KBM-7 (cell line): ENCODE measurements at regions of chr15 and their contacts with region 1.

Region 1: DNA sequence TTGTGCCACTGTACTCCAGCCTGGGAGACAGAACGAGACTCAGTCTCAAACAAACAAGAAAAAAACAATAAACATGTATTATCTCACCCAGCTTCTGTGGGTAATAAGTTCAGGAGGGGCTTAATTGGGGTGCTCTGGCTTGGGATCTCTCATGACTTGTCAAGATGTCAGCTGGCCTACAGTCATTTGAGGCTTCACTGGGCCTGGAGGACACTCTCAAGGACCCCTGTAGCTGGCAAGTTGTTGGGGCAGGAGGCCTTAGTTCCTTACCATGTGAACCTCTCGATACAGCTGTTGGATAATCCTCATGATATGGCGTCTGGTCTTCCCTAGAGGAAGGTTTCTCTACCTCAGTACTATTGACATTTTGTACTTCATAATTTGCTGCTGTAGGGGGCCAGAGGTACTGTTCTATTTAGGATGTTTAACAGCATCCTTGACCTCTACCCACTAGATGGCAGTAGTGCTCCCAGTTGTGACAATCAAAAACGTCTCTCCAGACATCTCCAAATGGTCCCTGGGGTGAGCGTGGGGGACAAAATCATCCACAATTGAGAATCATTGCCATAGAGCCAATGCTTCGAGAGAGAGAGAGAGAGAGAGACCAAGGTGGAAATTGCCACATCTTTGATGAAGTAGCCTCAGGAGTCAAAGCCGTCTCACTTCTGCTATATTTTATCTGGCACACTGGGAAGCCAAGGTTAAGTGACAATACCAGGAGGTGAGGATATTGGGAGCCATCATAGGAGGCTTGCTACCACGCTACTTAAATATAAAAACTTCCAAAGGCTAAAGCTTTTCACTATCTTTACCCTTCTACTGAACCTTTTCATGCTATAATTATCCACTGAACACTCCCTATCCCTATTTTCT is 23.9 kb upstream of the SLTM start:
- DNase-seq: peak; percentile 85

Region 2: DNA sequence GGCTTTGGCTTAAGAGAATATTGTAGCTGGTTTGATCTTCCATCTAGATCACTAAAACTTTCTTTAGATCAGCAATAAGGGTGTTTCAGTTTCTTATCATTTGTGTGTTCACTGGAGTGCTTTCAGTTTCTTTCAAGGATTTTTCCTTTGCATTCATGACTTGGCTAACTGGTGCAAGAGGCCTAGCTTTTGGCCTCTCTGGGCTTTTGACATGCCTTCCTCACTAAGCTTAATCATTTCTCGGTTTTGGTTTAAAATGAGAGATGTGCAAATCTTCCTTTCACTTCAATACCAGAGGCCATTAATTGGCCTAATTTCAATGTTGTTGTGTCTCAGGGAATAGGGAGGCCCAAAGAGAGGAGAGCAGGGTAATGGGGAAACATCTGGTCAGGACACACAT is 117.3 kb after region 1 on chr15:
- in situ Hi-C with region 1: no loop called
- DNase-seq: no peak

Region 3: GRCh38 chr15:59492389-59493377 is 535.3 kb after region 1 on chr15:
- in situ Hi-C with region 1: loop called (anchors 25 kb)
- DNase-seq: peak; percentile 69